H1 (cell line): ENCODE measurements at regions of chr3 and their contacts with region 1.

Region 1: GRCh38 chr3:107064445-107065060 is 312.7 kb upstream of the CCDC54 start:
- DNase-seq: peak; percentile 31 to 79
- H3K4me3 ChIP-seq: no peak overlapping the region
- H3K27ac ChIP-seq: no peak overlapping the region
- H3K4me1 ChIP-seq: peaks cover 0 to 8% (median 2%) of the 10 kb centered on the region in 4 experiments; a peak in 5 of 7 replicates
- H3K27me3 ChIP-seq: no peaks in the 10 kb centered on the region
- CTCF ChIP-seq: peak; percentile 15 to 78 (median 77)
- EP300 ChIP-seq: no peak
- POLR2A ChIP-seq: no peak
- RAD21 ChIP-seq: peak; percentile 97

Region 2: GRCh38 chr3:106617276-106617675 is 447.3 kb before region 1 on chr3:
- CTCF ChIA-PET with region 1: interaction called, 12 read pairs
- POLR2A ChIA-PET with region 1: no interaction called
- DNase-seq: no peak
- H3K4me3 ChIP-seq: no peak overlapping the region
- H3K27ac ChIP-seq: no peak overlapping the region
- H3K4me1 ChIP-seq: no peaks in the 10 kb centered on the region; a peak in 1 of 7 replicates
- H3K27me3 ChIP-seq: no peaks in the 10 kb centered on the region
- CTCF ChIP-seq: no peak
- EP300 ChIP-seq: no peak
- POLR2A ChIP-seq: no peak
- RAD21 ChIP-seq: no peak

Region 3: GRCh38 chr3:107077391-107077790 is 12.8 kb after region 1 on chr3:
- CTCF ChIA-PET with region 1: interaction called, 14 read pairs
- POLR2A ChIA-PET with region 1: no interaction called
- DNase-seq: no peak
- H3K4me3 ChIP-seq: no peak overlapping the region
- H3K27ac ChIP-seq: no peak overlapping the region
- H3K4me1 ChIP-seq: no peaks in the 10 kb centered on the region
- H3K27me3 ChIP-seq: no peaks in the 10 kb centered on the region
- CTCF ChIP-seq: no peak
- EP300 ChIP-seq: no peak
- POLR2A ChIP-seq: no peak
- RAD21 ChIP-seq: no peak

Region 4: GRCh38 chr3:107198581-107199181 is 134.1 kb after region 1 on chr3:
- CTCF ChIA-PET with region 1: no interaction called
- POLR2A ChIA-PET with region 1: no interaction called
- DNase-seq: no peak
- H3K4me3 ChIP-seq: no peak overlapping the region
- H3K27ac ChIP-seq: no peak overlapping the region
- H3K4me1 ChIP-seq: no peaks in the 10 kb centered on the region
- H3K27me3 ChIP-seq: no peaks in the 10 kb centered on the region
- CTCF ChIP-seq: no peak
- EP300 ChIP-seq: no peak
- POLR2A ChIP-seq: no peak
- RAD21 ChIP-seq: no peak